H1 (cell line): ENCODE measurements at regions of chr12 and their contacts with region 1.

Region 1: DNA sequence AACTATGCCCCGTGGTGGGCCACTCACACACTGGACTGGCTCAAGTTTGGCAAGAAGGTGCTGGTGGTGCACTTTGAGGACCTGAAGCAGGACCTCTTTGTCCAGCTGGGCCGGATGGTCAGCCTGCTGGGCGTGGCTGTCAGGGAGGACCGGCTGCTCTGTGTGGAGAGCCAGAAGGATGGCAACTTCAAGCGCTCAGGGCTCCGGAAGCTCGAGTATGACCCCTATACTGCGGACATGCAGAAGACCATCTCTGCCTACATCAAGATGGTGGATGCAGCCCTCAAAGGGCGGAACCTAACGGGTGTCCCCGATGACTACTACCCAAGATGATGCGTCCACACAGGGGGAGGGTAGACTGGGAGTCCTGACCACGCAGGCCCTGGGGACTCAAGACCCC is 91.1 kb downstream of the CMKLR1 start:
- DNase-seq: no peak
- H3K4me3 ChIP-seq: no peak overlapping the region
- H3K27ac ChIP-seq: no peak overlapping the region
- H3K4me1 ChIP-seq: peaks cover 0 to 7% (median 2%) of the 10 kb centered on the region in 4 experiments; a peak in 3 of 7 replicates
- H3K27me3 ChIP-seq: no peaks in the 10 kb centered on the region
- CTCF ChIP-seq: no peak
- EP300 ChIP-seq: no peak
- POLR2A ChIP-seq: no peak
- RAD21 ChIP-seq: no peak

Region 2: DNA sequence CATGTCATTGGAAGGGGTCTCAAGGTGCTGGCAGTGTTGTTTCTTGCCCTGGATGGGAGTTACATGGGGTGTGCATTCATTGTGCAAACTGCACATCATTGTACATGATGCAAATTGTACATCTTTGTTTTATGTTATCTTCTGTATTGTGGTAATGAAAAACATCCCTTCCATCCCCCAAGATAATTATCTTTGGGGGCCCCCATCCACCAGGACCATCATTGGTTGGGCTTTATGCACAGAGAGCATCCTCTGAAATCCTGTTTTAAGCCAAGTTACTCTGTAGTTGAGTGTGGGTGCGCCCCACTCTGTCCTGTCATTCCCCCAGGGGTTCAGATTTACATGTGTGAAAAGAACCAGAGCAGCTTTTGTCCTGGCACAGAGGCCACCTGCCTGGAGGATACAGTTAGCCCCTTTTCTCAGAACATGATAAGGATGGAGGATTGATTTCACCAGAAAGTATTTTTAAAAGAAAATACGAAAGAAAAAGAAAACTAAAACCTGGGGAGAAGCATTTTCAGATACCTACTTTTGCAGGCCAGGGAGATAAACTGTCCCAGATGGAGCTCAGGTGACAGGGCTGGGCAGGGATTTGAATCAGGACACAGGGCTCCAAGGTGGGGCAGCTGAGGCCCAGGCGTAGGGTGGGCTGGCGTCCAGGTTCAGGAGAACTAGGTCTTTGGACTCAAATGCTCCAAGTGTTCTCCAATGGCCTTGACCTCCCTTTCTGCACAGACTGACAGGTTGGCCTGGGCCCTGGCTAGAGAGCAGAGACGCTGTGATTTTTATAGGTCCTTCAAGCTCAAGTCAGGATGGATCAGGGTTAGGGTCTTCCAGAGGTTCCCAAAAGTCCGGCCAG is 101.7 kb before region 1 on chr12:
- CTCF ChIA-PET with region 1: no interaction called
- POLR2A ChIA-PET with region 1: no interaction called
- DNase-seq: no peak
- H3K4me3 ChIP-seq: no peak overlapping the region
- H3K27ac ChIP-seq: no peak overlapping the region
- H3K4me1 ChIP-seq: peaks cover 3 to 11% (median 7%) of the 10 kb centered on the region in 4 experiments; a peak in 6 of 7 replicates
- H3K27me3 ChIP-seq: no peaks in the 10 kb centered on the region
- CTCF ChIP-seq: no peak
- EP300 ChIP-seq: no peak
- POLR2A ChIP-seq: no peak
- RAD21 ChIP-seq: no peak

Region 3: GRCh38 chr12:108234158-108234557 is 13.9 kb before region 1 on chr12:
- CTCF ChIA-PET with region 1: interaction called, 10 read pairs
- POLR2A ChIA-PET with region 1: no interaction called
- DNase-seq: no peak
- H3K4me3 ChIP-seq: no peak overlapping the region
- H3K27ac ChIP-seq: no peak overlapping the region
- H3K4me1 ChIP-seq: peaks cover 5 to 27% (median 11%) of the 10 kb centered on the region in 4 experiments; a peak in 6 of 7 replicates
- H3K27me3 ChIP-seq: no peaks in the 10 kb centered on the region
- CTCF ChIP-seq: peak in 2 of 3 experiments; percentile 21 to 24; a peak in 1 of 4 replicates
- EP300 ChIP-seq: no peak
- POLR2A ChIP-seq: no peak
- RAD21 ChIP-seq: peak; percentile 49 to 67

Region 4: DNA sequence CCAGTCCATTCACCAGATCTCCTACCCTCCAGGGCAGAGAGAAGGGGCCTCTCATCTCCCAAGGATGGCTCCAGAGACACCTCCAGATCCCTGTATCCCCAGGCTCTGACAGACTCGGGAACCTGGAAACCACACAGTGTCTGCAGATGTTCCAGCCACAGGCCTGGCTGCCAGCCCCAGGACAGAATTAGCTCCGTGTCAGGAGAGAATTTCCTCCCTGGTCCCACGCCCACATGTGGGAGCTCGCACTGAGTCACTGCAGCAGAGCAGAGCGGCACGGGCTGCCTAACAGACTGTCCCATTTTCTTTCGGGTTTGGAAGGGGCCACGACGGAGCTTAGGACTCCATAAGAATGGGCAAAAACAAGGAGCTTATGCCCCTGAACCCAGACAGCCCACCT is 57.5 kb after region 1 on chr12:
- CTCF ChIA-PET with region 1: no interaction called
- POLR2A ChIA-PET with region 1: no interaction called
- DNase-seq: no peak
- H3K4me3 ChIP-seq: no peak overlapping the region
- H3K27ac ChIP-seq: no peak overlapping the region
- H3K4me1 ChIP-seq: peaks cover 2 to 26% (median 14%) of the 10 kb centered on the region in 4 experiments
- H3K27me3 ChIP-seq: no peaks in the 10 kb centered on the region
- CTCF ChIP-seq: no peak
- EP300 ChIP-seq: no peak
- POLR2A ChIP-seq: no peak
- RAD21 ChIP-seq: no peak